Naive thymus-derived CD4-positive, alpha-beta T cell (primary cell): ENCODE measurements at regions of chr19 and their contacts with region 1.

Region 1: GRCh38 chr19:29212648-29213573 is at the start of gene UQCRFS1:
- DNase-seq: peak; percentile 92 to 96 (median 95)
- ATAC-seq: peak; percentile 97
- H3K4me3 ChIP-seq: peak within 1 kb of the TSS; percentile 94
- H3K4me3 Mint-ChIP-seq: peak within 1 kb of the TSS; percentile 89 to 99 (median 96)
- H3K27ac ChIP-seq: peak within 1 kb of the TSS; percentile 96
- H3K27ac Mint-ChIP-seq: peak within 1 kb of the TSS; percentile 88 to 99 (median 98)
- H3K4me1 ChIP-seq: peaks cover 9 to 34% of the 10 kb centered on the region in 2 donors
- H3K4me1 Mint-ChIP-seq: peaks cover 32 to 54% (median 50%) of the 10 kb centered on the region in 7 donors
- H3K27me3 ChIP-seq: no peaks in the 10 kb centered on the region
- H3K27me3 Mint-ChIP-seq: peaks cover 0 to 12% (median 4%) of the 10 kb centered on the region in 5 donors
- total RNA-seq, gene UQCRFS1: 16.1 to 28.3 (median 23.9) TPM

Region 2: GRCh38 chr19:27793644-27794493 is 1419.0 kb before region 1 on chr19:
- CTCF ChIA-PET with region 1: no interaction called
- POLR2A ChIA-PET with region 1: no interaction called
- intact Hi-C with region 1: loop called in 1 of 2 experiments (anchors 5 kb)
- DNase-seq: peak; percentile 79 to 92 (median 91)
- ATAC-seq: peak; percentile 98
- H3K4me3 ChIP-seq: peak overlapping the region; percentile 92
- H3K4me3 Mint-ChIP-seq: peak overlapping the region; percentile 89 to 99 (median 94)
- H3K27ac ChIP-seq: peak overlapping the region; percentile 75
- H3K27ac Mint-ChIP-seq: peak overlapping the region; percentile 89 to 96 (median 93)
- H3K4me1 ChIP-seq: peaks cover 15 to 18% of the 10 kb centered on the region in 2 donors
- H3K4me1 Mint-ChIP-seq: peaks cover 12 to 48% (median 32%) of the 10 kb centered on the region in 7 donors
- H3K27me3 ChIP-seq: no peaks in the 10 kb centered on the region
- H3K27me3 Mint-ChIP-seq: no peaks in the 10 kb centered on the region

Region 3: GRCh38 chr19:29277102-29277501 is 64.2 kb after region 1 on chr19:
- CTCF ChIA-PET with region 1: no interaction called
- POLR2A ChIA-PET with region 1: no interaction called
- intact Hi-C with region 1: loop called in 1 of 2 experiments (anchors 1 kb)
- DNase-seq: peak; percentile 16 to 67 (median 41)
- ATAC-seq: peak; percentile 96
- H3K4me3 ChIP-seq: no peak overlapping the region
- H3K4me3 Mint-ChIP-seq: peak overlapping the region in 9 of 10 donors; percentile 17 to 75 (median 37)
- H3K27ac ChIP-seq: no peak overlapping the region
- H3K27ac Mint-ChIP-seq: peak overlapping the region in 6 of 9 donors; percentile 1 to 73 (median 58)
- H3K4me1 ChIP-seq: no peaks in the 10 kb centered on the region
- H3K4me1 Mint-ChIP-seq: peaks cover 8 to 12% (median 10%) of the 10 kb centered on the region in 7 donors
- H3K27me3 ChIP-seq: no peaks in the 10 kb centered on the region
- H3K27me3 Mint-ChIP-seq: peaks cover 12 to 17% (median 13%) of the 10 kb centered on the region in 5 donors